Transverse colon (tissue), 4 donors: ENCODE measurements at regions of chr2 and their contacts with region 1.

Region 1: GRCh38 chr2:99356853-99357252 is 19.7 kb downstream of the EIF5B start:
- DNase-seq: no peak
- H3K4me3 ChIP-seq: no peak overlapping the region
- H3K27ac ChIP-seq: no peak overlapping the region
- H3K4me1 ChIP-seq: no peaks in the 10 kb centered on the region
- H3K27me3 ChIP-seq: no peaks in the 10 kb centered on the region
- CTCF ChIP-seq: no peak
- EP300 ChIP-seq: no peak
- POLR2A ChIP-seq: no peak

Region 2: GRCh38 chr2:97858442-97858841 is 1498.4 kb before region 1 on chr2:
- in situ Hi-C with region 1: no loop called
- intact Hi-C with region 1: loop called (anchors 5 kb)
- DNase-seq: no peak
- H3K4me3 ChIP-seq: no peak overlapping the region
- H3K27ac ChIP-seq: no peak overlapping the region
- H3K4me1 ChIP-seq: no peaks in the 10 kb centered on the region
- H3K27me3 ChIP-seq: no peaks in the 10 kb centered on the region
- CTCF ChIP-seq: no peak
- EP300 ChIP-seq: no peak
- POLR2A ChIP-seq: no peak